Right cardiac atrium (tissue), 5 donors: ENCODE measurements at regions of chr11 and their contacts with region 1.

Region 1: DNA sequence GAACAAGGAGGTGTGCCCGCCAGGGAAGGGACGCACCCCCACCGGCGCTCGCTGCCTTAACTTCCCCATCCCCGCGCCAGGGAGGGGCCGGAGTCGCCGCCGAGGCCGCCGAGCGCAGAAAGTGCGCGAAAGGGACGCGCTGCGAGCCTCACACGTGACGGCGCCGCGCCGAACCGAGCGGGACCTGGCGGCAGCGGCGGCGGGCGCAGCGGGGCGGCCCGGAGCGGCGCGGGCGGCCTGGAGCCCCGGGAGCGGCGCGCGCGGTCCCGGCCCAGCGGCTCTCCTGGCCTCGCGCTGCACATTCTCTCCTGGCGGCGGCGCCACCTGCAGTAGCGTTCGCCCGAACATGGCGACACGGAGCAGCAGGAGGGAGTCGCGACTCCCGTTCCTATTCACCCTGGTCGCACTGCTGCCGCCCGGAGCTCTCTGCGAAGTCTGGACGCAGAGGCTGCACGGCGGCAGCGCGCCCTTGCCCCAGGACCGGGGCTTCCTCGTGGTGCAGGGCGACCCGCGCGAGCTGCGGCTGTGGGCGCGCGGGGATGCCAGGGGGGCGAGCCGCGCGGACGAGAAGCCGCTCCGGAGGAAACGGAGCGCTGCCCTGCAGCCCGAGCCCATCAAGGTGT is at the start of gene SORL1:
- DNase-seq: peak; percentile 72 to 93 (median 90)
- ATAC-seq: peak; percentile 92 to 95
- H3K4me3 ChIP-seq: peak within 1 kb of the TSS; percentile 37
- H3K27ac ChIP-seq: no peak within 1 kb of the TSS
- H3K4me1 ChIP-seq: peaks cover 2% of the 10 kb centered on the region
- H3K27me3 ChIP-seq: no peaks in the 10 kb centered on the region
- total RNA-seq, gene SORL1: 3.7 to 9.2 (median 5.4) TPM

Region 2: GRCh38 chr11:121328967-121329679 is 123.0 kb before region 1 on chr11:
- intact Hi-C with region 1: loop called in 1 of 4 experiments (anchors 5 kb)
- DNase-seq: no peak
- ATAC-seq: no peak
- H3K4me3 ChIP-seq: no peak overlapping the region
- H3K27ac ChIP-seq: no peak overlapping the region
- H3K4me1 ChIP-seq: no peaks in the 10 kb centered on the region
- H3K27me3 ChIP-seq: no peaks in the 10 kb centered on the region

Region 3: GRCh38 chr11:121575250-121575962 is 123.3 kb after region 1 on chr11:
- intact Hi-C with region 1: loop called in 2 of 4 experiments (anchors 10 kb)
- DNase-seq: peak; percentile 93 to 94 (median 93)
- ATAC-seq: peak; percentile 98
- H3K4me3 ChIP-seq: no peak overlapping the region
- H3K27ac ChIP-seq: no peak overlapping the region
- H3K4me1 ChIP-seq: no peaks in the 10 kb centered on the region
- H3K27me3 ChIP-seq: no peaks in the 10 kb centered on the region